ENCODE measurements at regions of chr2 and their contacts with region 1.

Region 1: DNA sequence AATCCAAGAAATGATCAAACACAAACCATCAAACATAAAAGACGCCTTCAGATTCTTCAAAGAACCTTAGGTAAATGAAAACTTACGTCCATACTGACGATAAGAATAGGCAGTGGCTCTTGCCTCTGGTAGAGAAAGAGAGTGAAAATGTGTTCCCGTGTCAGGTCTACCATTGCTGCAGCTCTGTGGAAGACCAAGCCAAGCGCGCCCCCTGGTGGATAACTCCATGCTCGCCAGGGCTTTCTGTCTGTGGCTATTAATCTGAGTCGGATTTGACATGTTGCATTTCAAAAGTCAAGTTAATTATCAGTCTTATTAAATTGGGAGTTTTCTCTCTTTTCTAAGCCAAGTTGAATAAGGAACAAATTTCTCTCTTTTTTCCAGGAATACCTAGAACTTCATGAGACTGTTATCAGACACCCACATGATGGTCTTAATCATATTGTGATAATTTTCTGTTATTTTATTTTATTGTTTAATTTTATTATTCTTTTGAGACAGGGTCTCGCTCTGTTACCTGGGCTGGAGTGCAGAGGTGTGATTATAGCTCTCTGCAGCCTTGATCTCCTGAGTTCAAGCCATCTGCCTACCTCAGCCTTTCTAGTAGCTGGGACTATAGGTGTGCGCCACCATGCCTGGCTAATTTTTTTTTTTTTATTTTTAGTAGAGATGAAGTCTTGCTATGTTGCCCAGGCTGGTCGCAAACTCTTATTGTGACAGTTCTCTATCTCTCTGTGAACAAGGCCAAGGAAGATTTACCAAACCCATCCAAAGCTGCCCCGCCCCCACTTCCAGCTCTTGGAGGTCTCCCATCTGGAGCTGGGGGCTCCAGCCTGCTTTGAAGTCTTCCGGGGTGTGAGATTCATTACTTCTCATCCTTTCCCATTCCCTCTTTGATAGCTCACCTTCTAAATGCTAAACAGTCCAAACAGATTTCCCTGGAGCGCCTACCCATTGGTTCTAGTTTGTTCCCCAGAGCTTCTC is 15.8 kb upstream of the ZAP70 start:
- DNase-seq: peak; percentile 87 to 95 (median 88)
- ATAC-seq: peak; percentile 78 to 92 (median 90)
- H3K4me3 ChIP-seq: no peak overlapping the region
- H3K27ac ChIP-seq: no peak overlapping the region
- H3K4me1 ChIP-seq: peaks cover 0 to 7% (median 1%) of the 10 kb centered on the region in 12 donors
- H3K27me3 ChIP-seq: no peaks in the 10 kb centered on the region
- CTCF ChIP-seq: peak; percentile 91 to 99 (median 96)
- POLR2A ChIP-seq: no peak

Region 2: DNA sequence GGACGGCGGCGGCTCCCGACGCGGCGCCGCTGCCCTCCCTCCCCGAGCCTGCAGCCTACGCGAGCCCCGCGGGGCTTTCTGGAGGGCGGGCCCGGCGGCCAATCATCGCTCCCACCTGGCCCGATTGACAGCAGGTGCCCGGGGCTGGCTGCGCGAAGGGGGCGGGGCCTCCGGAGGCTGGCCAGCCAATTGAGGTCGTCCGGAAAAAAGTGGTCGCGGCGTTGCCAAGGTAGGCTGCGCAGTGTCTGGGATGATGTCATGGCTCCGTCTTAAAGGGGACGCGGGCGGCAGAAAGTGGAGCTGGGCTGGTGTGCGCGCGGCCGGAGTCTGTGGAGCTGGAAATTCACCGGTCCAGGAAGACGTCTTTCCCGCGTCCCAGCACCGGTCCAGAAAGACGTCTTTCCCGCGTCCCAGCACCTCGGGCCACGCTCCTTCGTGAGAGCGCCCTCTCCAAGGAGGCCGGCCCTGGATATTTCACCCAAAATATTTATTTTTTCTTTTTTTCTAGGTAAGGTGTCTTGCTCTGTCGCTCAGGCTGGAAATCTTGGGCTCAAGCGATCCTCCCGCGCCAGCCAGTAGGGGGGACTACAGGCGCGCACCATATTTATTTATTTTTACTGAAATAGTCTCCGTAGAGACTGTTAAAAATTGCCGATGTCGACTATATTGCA is 33.4 kb before region 1 on chr2 and contains the start of gene ACTR1B:
- intact Hi-C with region 1: loop called in 2 of 10 experiments (anchors 2 kb)
- DNase-seq: peak; percentile 98 to 99 (median 98)
- ATAC-seq: peak; percentile 96 to 98 (median 96)
- H3K4me3 ChIP-seq: peak within 1 kb of the TSS; percentile 57 to 98 (median 68)
- H3K27ac ChIP-seq: peak within 1 kb of the TSS; percentile 88 to 99 (median 96)
- H3K4me1 ChIP-seq: peaks cover 4 to 38% (median 30%) of the 10 kb centered on the region in 12 donors
- H3K27me3 ChIP-seq: no peaks in the 10 kb centered on the region
- CTCF ChIP-seq: peak; percentile 32 to 76 (median 58)
- POLR2A ChIP-seq: peak in 1 of 2 donors; percentile 95
- total RNA-seq, gene ACTR1B: 62.1 to 84.1 (median 74.9) TPM

Region 3: GRCh38 chr2:97740590-97741182 is 43.1 kb after region 1 on chr2:
- intact Hi-C with region 1: loop called in 2 of 10 experiments (anchors 5 kb)
- DNase-seq: peak in 2 of 5 donors; percentile 31 to 45
- ATAC-seq: peak in 1 of 4 donors; percentile 28
- H3K4me3 ChIP-seq: no peak overlapping the region
- H3K27ac ChIP-seq: no peak overlapping the region
- H3K4me1 ChIP-seq: peaks cover 0 to 26% (median 6%) of the 10 kb centered on the region in 12 donors
- H3K27me3 ChIP-seq: no peaks in the 10 kb centered on the region
- CTCF ChIP-seq: peak; percentile 48 to 69 (median 61)
- POLR2A ChIP-seq: peak in 1 of 2 donors; percentile 13

Region 4: GRCh38 chr2:97751752-97752151 is 54.2 kb after region 1 on chr2:
- intact Hi-C with region 1: loop called in 3 of 10 experiments (anchors 2 to 5 kb)
- DNase-seq: peak in 1 of 5 donors; percentile 23
- ATAC-seq: peak; percentile 36 to 70 (median 53)
- H3K4me3 ChIP-seq: no peak overlapping the region
- H3K27ac ChIP-seq: no peak overlapping the region
- H3K4me1 ChIP-seq: peaks cover 0 to 46% (median 12%) of the 10 kb centered on the region in 12 donors
- H3K27me3 ChIP-seq: no peaks in the 10 kb centered on the region
- CTCF ChIP-seq: no peak
- POLR2A ChIP-seq: no peak

Region 5: GRCh38 chr2:97774425-97774824 is 76.9 kb after region 1 on chr2:
- intact Hi-C with region 1: no loop called
- DNase-seq: no peak
- ATAC-seq: peak in 3 of 4 donors; percentile 29 to 75 (median 67)
- H3K4me3 ChIP-seq: no peak overlapping the region
- H3K27ac ChIP-seq: no peak overlapping the region
- H3K4me1 ChIP-seq: peaks cover 0 to 9% (median 0%) of the 10 kb centered on the region in 12 donors
- H3K27me3 ChIP-seq: no peaks in the 10 kb centered on the region
- CTCF ChIP-seq: peak in 6 of 12 donors; percentile 11 to 48 (median 27)
- POLR2A ChIP-seq: no peak

Region 6: DNA sequence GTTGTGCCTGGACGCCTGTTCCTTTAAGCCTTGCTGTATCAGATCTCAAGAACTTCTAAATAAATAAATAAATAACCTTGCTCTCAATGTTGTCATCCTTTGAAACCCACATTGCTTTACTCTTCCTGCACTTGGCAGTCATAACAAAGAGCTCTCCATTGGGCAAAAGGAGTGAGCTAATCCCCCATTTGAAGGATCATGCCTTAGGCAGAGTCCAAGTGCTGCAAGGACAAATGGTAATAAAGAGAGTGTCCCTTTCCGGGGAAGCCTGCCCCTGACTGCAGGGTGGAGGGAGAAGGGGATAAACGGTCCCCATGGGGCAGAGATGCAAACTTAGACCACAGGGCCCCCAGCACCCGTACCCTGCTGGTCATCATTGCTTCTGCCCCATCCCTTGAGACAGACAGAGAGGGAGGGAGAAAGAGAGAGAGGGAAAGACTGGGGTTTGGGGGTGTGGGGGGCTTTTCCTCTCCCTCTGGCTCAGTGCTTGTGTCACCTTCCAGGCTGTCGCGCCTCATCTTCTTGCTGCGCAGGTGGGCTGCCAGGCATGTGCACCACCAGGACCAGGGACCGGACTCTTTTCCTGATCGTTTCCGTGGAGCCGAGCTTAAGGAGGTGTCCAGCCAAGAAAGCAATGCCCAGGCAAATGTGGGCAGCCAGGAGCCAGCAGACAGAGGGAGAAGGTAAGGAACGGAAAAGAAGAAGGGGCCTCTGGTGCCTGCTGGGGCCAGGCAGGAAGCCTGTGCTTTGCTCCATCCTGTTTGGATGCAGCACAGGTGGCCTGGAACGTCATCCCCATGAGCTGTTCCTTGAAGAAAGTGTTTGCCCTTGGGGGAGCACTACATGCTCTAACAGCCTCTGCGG is 682.4 kb after region 1 on chr2:
- intact Hi-C with region 1: loop called (anchors 2 to 10 kb)
- DNase-seq: no peak
- ATAC-seq: peak in 1 of 4 donors; percentile 3
- H3K4me3 ChIP-seq: no peak overlapping the region
- H3K27ac ChIP-seq: peak overlapping the region in 3 of 12 donors; percentile 13 to 52 (median 51)
- H3K4me1 ChIP-seq: peaks cover 0 to 18% (median 12%) of the 10 kb centered on the region in 12 donors
- H3K27me3 ChIP-seq: peaks cover 0 to 5% (median 0%) of the 10 kb centered on the region in 9 donors
- CTCF ChIP-seq: no peak
- POLR2A ChIP-seq: no peak

Region 7: GRCh38 chr2:98385050-98385699 is 687.6 kb after region 1 on chr2:
- intact Hi-C with region 1: loop called (anchors 2 to 10 kb)
- DNase-seq: peak; percentile 55 to 82 (median 70)
- ATAC-seq: peak; percentile 60 to 90 (median 84)
- H3K4me3 ChIP-seq: no peak overlapping the region
- H3K27ac ChIP-seq: no peak overlapping the region
- H3K4me1 ChIP-seq: peaks cover 0 to 2% (median 0%) of the 10 kb centered on the region in 12 donors
- H3K27me3 ChIP-seq: no peaks in the 10 kb centered on the region
- CTCF ChIP-seq: peak; percentile 79 to 96 (median 90)
- POLR2A ChIP-seq: no peak

Measured in heart left ventricle (tissue), 16 donors.